H1 (cell line): ENCODE measurements at regions of chrX and their contacts with region 1.

Region 1: GRCh38 chrX:46758906-46759644 is at the start of gene SLC9A7:
- DNase-seq: peak; percentile 53 to 89
- H3K4me3 ChIP-seq: peak within 1 kb of the TSS; percentile 61 to 79 (median 73)
- H3K27ac ChIP-seq: no peak within 1 kb of the TSS; the same call in 1 of the 2 replicates
- H3K4me1 ChIP-seq: peaks cover 2 to 16% (median 10%) of the 10 kb centered on the region in 4 experiments; a peak in 6 of 7 replicates
- H3K27me3 ChIP-seq: no peaks in the 10 kb centered on the region; a peak in 1 of 7 replicates
- CTCF ChIP-seq: peak; percentile 79 to 82 (median 79)
- EP300 ChIP-seq: no peak
- POLR2A ChIP-seq: no peak
- RAD21 ChIP-seq: peak; percentile 81 to 89
- total RNA-seq, gene SLC9A7: 12.7 and 17.2 TPM in 2 replicates

Region 2: DNA sequence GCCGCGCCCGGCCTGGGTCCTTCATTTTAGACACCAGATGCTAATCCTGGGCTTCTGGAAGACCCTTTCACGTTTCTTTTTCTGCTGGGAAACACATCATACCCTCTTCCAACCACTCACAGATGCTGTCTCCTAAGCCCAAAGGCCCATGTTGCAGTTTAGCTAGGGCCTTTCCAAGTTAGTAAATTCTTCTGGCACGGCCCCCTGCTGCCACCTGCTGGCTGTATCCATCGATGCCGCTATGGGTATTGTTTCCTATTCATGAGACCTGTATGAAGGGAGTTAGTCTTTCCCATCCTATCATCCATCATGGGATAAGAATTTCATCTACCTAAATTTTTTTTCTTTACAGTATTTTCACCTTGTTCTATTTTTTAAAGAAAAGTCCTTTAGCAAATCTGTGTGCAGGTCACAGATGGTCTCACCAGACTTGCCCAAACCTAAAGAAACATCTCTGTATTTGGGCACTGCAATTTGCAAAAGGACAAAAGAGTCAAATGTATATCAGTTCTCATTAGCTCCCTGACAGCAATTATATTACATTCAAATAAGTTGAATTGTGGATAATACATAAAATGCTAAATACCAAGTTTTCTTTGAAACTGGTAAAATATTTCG is 37.6 kb after region 1 on chrX:
- CTCF ChIA-PET with region 1: interaction called, 30 read pairs
- POLR2A ChIA-PET with region 1: no interaction called
- DNase-seq: peak in 1 of 2 experiments; percentile 78
- H3K4me3 ChIP-seq: no peak overlapping the region
- H3K27ac ChIP-seq: no peak overlapping the region
- H3K4me1 ChIP-seq: peaks cover 0 to 2% (median 0%) of the 10 kb centered on the region in 4 experiments; a peak in 1 of 7 replicates
- H3K27me3 ChIP-seq: no peaks in the 10 kb centered on the region
- CTCF ChIP-seq: peak; percentile 67 to 76 (median 73)
- EP300 ChIP-seq: no peak
- POLR2A ChIP-seq: no peak
- RAD21 ChIP-seq: peak; percentile 81 to 85